ENCODE measurements at regions of chr9 and their contacts with region 1.

Region 1: DNA sequence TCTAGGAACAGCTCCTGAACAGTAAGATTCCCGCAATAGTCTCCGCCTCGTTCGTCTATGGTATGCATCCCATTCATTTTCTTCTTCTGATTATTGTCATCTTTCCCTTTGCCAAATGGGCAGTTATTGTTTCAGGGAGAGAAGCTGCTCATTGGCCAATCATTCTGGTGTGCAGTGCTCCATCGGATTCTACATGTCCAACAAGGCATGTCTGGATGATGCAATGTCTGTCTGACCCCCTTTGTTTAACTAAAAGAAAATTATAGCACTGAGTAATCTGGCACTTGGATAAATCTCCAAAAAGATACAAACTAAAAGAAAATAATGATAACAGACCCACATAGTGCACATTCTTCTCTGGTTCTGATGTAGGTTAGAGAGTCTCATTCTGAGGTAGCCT is 515.6 kb upstream of the DMAC1 start:
- DNase-seq: no peak
- ATAC-seq: no peak
- H3K4me3 Mint-ChIP-seq: no peak overlapping the region
- H3K27ac Mint-ChIP-seq: no peak overlapping the region
- H3K4me1 Mint-ChIP-seq: no peaks in the 10 kb centered on the region
- H3K27me3 Mint-ChIP-seq: peaks cover 4% of the 10 kb centered on the region

Region 2: GRCh38 chr9:8365029-8365428 is 49.8 kb after region 1 on chr9:
- CTCF ChIA-PET with region 1: no interaction called
- POLR2A ChIA-PET with region 1: no interaction called
- intact Hi-C with region 1: loop called in 1 of 2 experiments (anchors 5 kb)
- DNase-seq: no peak
- ATAC-seq: no peak
- H3K4me3 Mint-ChIP-seq: no peak overlapping the region
- H3K27ac Mint-ChIP-seq: no peak overlapping the region
- H3K4me1 Mint-ChIP-seq: peaks cover 6% of the 10 kb centered on the region
- H3K27me3 Mint-ChIP-seq: no peaks in the 10 kb centered on the region